Activated naive CD8-positive, alpha-beta T cell treated with anti-CD3 and anti-CD28 coated beads, Interleukin-2, amount 10 ng/mL, durations not matched to agents 7 days and 5 days (primary cell): ENCODE measurements at regions of chr2 and their contacts with region 1.

Region 1: GRCh38 chr2:12488352-12489318 is 228.1 kb upstream of the TRIB2 start:
- DNase-seq: peak; percentile 47
- ATAC-seq: peak; percentile 99
- H3K4me3 Mint-ChIP-seq: peak overlapping the region; percentile 71
- H3K27ac Mint-ChIP-seq: peak overlapping the region; percentile 87
- H3K4me1 Mint-ChIP-seq: peaks cover 40% of the 10 kb centered on the region
- H3K27me3 Mint-ChIP-seq: no peaks in the 10 kb centered on the region

Region 2: GRCh38 chr2:12501469-12502158 is 13.0 kb after region 1 on chr2:
- POLR2A ChIA-PET with region 1: interaction called, 12 read pairs
- DNase-seq: peak; percentile 66
- ATAC-seq: peak; percentile 96
- H3K4me3 Mint-ChIP-seq: peak overlapping the region; percentile 66
- H3K27ac Mint-ChIP-seq: peak overlapping the region; percentile 87
- H3K4me1 Mint-ChIP-seq: peaks cover 69% of the 10 kb centered on the region
- H3K27me3 Mint-ChIP-seq: no peaks in the 10 kb centered on the region